ENCODE measurements at regions of chr1 and their contacts with region 1.

Region 1: GRCh38 chr1:39575191-39576015 is 1.2 kb downstream of the PABPC4 start:
- DNase-seq: peak; percentile 42
- H3K4me3 Mint-ChIP-seq: peak overlapping the region; percentile 88
- H3K27ac Mint-ChIP-seq: peak overlapping the region; percentile 88
- H3K4me1 Mint-ChIP-seq: peaks cover 16% of the 10 kb centered on the region
- H3K27me3 Mint-ChIP-seq: no peaks in the 10 kb centered on the region
- CTCF ChIP-seq: no peak

Region 2: GRCh38 chr1:39561279-39561678 is 14.1 kb before region 1 on chr1:
- CTCF ChIA-PET with region 1: interaction called, 5 read pairs
- POLR2A ChIA-PET with region 1: interaction called, 36 read pairs
- intact Hi-C with region 1: no loop called
- DNase-seq: no peak
- H3K4me3 Mint-ChIP-seq: no peak overlapping the region
- H3K27ac Mint-ChIP-seq: no peak overlapping the region
- H3K4me1 Mint-ChIP-seq: no peaks in the 10 kb centered on the region
- H3K27me3 Mint-ChIP-seq: no peaks in the 10 kb centered on the region
- CTCF ChIP-seq: no peak

Region 3: DNA sequence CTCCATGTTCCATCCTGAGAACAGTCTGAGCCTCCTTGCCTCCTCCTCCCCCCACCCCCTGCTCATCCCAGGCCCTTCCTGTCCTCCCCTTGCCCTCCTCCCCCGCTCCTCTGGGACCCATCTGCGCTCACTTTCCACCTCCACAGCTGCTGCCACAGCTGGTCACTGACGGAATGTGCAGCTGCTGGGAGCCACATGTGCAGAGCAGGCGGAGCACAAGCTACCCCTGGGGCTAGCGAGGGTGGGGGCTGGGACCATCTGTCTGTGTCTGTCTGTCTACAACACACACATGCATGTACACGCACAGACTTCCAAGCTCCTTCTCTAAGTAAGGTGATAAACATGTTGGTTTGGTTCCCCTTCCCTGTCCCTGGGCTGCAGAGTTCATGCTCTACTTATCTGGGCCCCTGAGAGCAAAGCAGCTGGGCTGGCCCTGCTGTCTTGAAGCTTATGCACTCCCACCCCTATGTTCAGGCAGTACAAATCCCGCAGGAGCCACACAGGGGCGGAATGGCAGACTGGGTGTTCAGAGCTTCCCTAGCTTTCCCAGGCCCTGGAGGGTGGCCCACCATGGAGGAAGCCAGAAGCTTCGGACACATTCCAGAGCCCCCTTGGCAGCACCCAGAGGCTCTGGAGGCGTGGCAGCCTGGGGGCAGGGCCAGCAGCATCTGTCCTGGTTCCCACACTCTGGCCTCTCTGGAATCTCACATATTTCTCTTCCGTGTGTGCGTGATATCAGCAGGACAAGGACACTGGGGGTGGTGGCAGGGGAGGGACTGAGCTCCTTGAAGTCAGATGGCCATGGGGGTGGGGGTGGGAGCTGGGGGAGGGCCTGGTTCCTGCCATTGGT is 71.1 kb after region 1 on chr1:
- CTCF ChIA-PET with region 1: no interaction called
- POLR2A ChIA-PET with region 1: no interaction called
- intact Hi-C with region 1: no loop called
- DNase-seq: no peak
- H3K4me3 Mint-ChIP-seq: no peak overlapping the region
- H3K27ac Mint-ChIP-seq: no peak overlapping the region
- H3K4me1 Mint-ChIP-seq: no peaks in the 10 kb centered on the region
- H3K27me3 Mint-ChIP-seq: no peaks in the 10 kb centered on the region
- CTCF ChIP-seq: no peak